ENCODE measurements at regions of chr21 and their contacts with region 1.

Region 1: GRCh38 chr21:31204801-31205200 is 139.3 kb downstream of the TIAM1 start:
- DNase-seq: no peak
- ATAC-seq: no peak
- H3K4me3 ChIP-seq: no peak overlapping the region
- H3K27ac ChIP-seq: no peak overlapping the region
- H3K4me1 ChIP-seq: no peaks in the 10 kb centered on the region; the same call in 1 of the 2 replicates
- H3K27me3 ChIP-seq: no peaks in the 10 kb centered on the region; the same call in 1 of the 2 replicates
- CTCF ChIP-seq: no peak

Region 2: GRCh38 chr21:31022306-31022705 is 182.5 kb before region 1 on chr21:
- CTCF ChIA-PET with region 1: no interaction called
- POLR2A ChIA-PET with region 1: no interaction called
- in situ Hi-C with region 1: no loop called
- intact Hi-C with region 1: no loop called
- DNase-seq: no peak
- ATAC-seq: no peak
- H3K4me3 ChIP-seq: no peak overlapping the region
- H3K27ac ChIP-seq: no peak overlapping the region
- H3K4me1 ChIP-seq: no peaks in the 10 kb centered on the region
- H3K27me3 ChIP-seq: no peaks in the 10 kb centered on the region
- CTCF ChIP-seq: no peak

Region 3: DNA sequence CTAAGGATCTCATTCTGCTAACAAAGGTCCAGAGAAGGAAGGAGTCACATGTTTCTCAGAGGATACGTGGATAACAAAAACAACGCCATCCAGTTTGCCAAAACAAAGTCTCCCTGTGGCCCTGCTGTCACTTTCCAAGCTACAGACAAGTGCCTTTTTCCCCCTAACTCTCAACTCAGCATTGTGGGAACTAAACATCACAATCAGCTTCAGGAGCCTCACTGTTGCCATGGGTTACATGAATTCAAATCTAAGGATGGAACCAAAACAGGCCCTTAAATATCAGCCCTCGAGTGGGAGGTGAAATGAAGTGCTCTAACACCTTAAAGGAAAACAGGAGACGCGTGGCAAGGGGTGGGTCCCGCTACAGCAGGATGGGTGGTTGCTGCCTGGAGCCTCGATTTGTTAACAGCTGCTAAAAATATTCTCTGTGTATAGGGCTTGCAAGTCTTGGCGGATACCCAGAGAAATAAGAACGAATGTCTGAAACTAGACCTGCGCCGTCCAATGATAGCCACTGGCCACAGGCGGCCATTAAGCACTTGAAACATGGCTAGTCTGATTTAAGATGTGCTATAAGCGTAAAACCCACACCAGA is 388.3 kb after region 1 on chr21:
- CTCF ChIA-PET with region 1: no interaction called
- POLR2A ChIA-PET with region 1: no interaction called
- in situ Hi-C with region 1: no loop called
- intact Hi-C with region 1: loop called (anchors 5 kb)
- DNase-seq: no peak
- ATAC-seq: no peak
- H3K4me3 ChIP-seq: no peak overlapping the region
- H3K27ac ChIP-seq: no peak overlapping the region
- H3K4me1 ChIP-seq: no peaks in the 10 kb centered on the region
- H3K27me3 ChIP-seq: no peaks in the 10 kb centered on the region
- CTCF ChIP-seq: no peak

Measured in Panc1 (cell line).